GM23248 (cell line): ENCODE measurements at regions of chr11 and their contacts with region 1.

Region 1: GRCh38 chr11:113289431-113290187 is 24.8 kb upstream of the TTC12 start:
- DNase-seq: peak; percentile 71
- H3K4me3 ChIP-seq: no peak overlapping the region
- H3K27ac ChIP-seq: no peak overlapping the region
- H3K4me1 ChIP-seq: no peaks in the 10 kb centered on the region
- H3K27me3 ChIP-seq: peaks cover 17% of the 10 kb centered on the region

Region 2: GRCh38 chr11:112280268-112281126 is 1009.1 kb before region 1 on chr11:
- in situ Hi-C with region 1: loop called (anchors 10 kb)
- DNase-seq: peak; percentile 92
- H3K4me3 ChIP-seq: peak overlapping the region; percentile 76
- H3K27ac ChIP-seq: no peak overlapping the region
- H3K4me1 ChIP-seq: peaks cover 9% of the 10 kb centered on the region
- H3K27me3 ChIP-seq: no peaks in the 10 kb centered on the region

Region 3: DNA sequence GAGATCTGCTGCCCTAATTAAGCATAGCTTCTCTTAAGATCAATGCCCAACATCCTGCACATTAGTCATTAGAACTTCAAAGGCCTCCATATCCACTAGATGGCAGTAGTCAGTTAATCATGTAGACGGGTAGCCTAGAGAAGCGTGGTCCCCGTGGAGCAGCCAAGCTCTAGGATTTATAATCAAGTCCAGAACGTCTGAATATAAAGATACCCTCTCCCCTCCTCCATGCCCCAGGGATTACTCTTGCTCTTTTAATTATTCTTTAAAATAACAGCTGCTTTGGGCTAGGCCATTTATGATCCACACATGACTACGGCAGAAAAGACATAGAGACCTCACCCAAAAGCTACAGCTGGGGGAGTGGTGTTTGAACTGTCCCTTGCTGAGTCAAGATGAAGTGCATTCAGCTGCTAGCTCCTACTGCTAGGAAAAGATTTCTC is 701.3 kb before region 1 on chr11:
- in situ Hi-C with region 1: loop called (anchors 10 kb)
- DNase-seq: peak; percentile 89
- H3K4me3 ChIP-seq: no peak overlapping the region
- H3K27ac ChIP-seq: no peak overlapping the region
- H3K4me1 ChIP-seq: no peaks in the 10 kb centered on the region
- H3K27me3 ChIP-seq: peaks cover 5% of the 10 kb centered on the region; the same call in 1 of the 2 replicates

Region 4: DNA sequence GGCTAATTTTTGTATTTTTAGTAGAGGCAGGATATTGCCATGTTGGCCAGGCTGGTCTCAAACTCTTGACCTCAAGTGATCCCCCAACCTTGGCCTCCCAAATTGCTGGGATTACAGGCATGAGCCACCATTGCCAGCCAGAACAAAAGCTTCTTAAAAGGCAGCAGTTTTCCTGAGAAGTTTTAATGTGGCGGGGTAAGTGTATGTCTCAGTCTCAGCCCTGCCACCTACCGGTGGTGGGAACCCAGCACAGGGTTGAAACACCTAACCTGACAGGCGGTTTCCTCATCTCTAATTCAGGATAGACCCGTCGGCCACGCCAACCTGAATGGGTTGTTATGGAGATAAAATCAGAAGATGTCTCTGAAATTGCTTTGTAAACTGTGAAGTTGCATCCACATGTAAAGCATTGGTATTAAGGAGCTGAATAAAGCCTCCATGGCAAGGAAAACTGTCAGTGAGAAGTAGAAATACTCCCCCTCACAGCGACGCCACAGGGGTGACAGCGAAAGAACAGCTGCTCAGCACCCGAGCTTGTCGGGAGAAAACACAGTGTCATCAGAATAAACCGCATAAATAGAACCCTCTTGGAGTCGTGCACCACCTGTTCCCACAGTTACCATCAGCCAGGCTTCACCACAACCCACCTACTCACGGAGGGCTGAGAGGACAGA is 494.3 kb before region 1 on chr11:
- in situ Hi-C with region 1: loop called (anchors 10 kb)
- DNase-seq: peak; percentile 76
- H3K4me3 ChIP-seq: no peak overlapping the region
- H3K27ac ChIP-seq: no peak overlapping the region
- H3K4me1 ChIP-seq: no peaks in the 10 kb centered on the region
- H3K27me3 ChIP-seq: no peaks in the 10 kb centered on the region

Region 5: GRCh38 chr11:113131036-113131775 is 158.4 kb before region 1 on chr11:
- in situ Hi-C with region 1: no loop called
- DNase-seq: no peak
- H3K4me3 ChIP-seq: no peak overlapping the region
- H3K27ac ChIP-seq: no peak overlapping the region
- H3K4me1 ChIP-seq: no peaks in the 10 kb centered on the region
- H3K27me3 ChIP-seq: no peaks in the 10 kb centered on the region; the same call in 1 of the 2 replicates

Region 6: DNA sequence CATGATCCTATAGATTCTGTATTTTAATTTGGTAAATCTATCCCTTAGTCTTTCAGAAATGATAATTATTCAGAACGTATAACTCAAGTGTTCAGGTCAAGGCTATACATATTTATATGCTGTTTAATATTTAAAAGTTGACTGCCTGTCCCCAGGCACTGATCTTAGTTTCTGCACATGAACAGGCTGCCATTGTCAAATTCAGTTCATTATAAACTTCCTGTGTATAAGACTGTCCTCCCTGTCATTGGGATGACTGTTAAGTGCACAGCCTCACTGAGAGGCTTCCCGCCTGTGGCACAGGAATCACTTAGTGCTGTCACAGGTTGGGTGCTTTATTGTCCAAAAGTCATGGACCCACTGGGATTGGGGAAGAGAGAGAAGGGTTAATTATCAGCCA is 67.4 kb before region 1 on chr11:
- in situ Hi-C with region 1: no loop called
- DNase-seq: no peak
- H3K4me3 ChIP-seq: no peak overlapping the region
- H3K27ac ChIP-seq: no peak overlapping the region
- H3K4me1 ChIP-seq: no peaks in the 10 kb centered on the region
- H3K27me3 ChIP-seq: no peaks in the 10 kb centered on the region

Region 7: DNA sequence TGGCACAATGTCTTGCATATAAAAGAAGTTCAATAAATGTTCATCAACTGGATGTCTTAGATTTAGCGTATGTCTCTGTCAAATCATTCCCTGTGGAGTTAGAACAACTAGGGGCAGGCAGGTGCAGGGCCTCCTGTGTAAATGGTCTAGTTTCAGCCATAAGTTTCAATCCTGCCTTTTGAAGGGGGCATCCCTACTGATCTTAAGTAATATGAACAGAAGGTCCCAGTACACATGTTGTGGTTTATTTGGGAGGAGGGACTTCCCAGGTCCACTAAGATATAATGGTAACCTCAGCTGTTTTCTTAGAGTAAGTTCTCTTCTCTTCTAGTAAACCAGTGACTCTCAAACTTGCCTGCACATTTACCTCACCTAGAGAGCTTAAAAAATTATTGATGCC is 44.6 kb after region 1 on chr11:
- in situ Hi-C with region 1: no loop called
- DNase-seq: no peak
- H3K4me3 ChIP-seq: no peak overlapping the region
- H3K27ac ChIP-seq: no peak overlapping the region
- H3K4me1 ChIP-seq: no peaks in the 10 kb centered on the region
- H3K27me3 ChIP-seq: no peaks in the 10 kb centered on the region